Gastrocnemius medialis (tissue), 4 donors: ENCODE measurements at regions of chrX and their contacts with region 1.

Region 1: GRCh38 chrX:119105826-119106225 is 21.8 kb downstream of the KIAA1210 start:
- DNase-seq: no peak
- ATAC-seq: no peak
- H3K4me3 ChIP-seq: no peak overlapping the region
- H3K27ac ChIP-seq: no peak overlapping the region
- H3K4me1 ChIP-seq: no peaks in the 10 kb centered on the region
- H3K27me3 ChIP-seq: no peaks in the 10 kb centered on the region
- CTCF ChIP-seq: no peak
- POLR2A ChIP-seq: no peak

Region 2: DNA sequence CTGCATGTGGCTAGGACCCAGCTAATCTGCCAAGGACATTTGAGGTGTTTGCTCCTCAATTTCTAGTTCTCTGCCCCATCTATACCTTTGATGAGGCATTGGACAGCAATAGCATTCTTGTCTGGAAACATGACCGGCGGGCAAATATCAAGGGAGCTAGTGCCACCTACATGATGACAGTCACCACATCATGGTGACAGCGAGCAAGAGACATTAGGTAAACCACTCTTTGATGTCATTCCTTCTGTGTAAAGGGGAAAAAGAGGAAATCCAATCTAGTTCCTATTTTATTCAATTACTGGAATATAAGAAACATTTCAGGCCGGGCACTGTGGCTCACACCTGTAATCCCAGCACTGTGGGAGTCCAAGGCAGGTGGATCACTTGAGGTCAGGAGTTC is 399.2 kb before region 1 on chrX:
- in situ Hi-C with region 1: no loop called
- intact Hi-C with region 1: no loop called
- DNase-seq: no peak
- ATAC-seq: no peak
- H3K4me3 ChIP-seq: no peak overlapping the region
- H3K27ac ChIP-seq: no peak overlapping the region
- H3K4me1 ChIP-seq: no peaks in the 10 kb centered on the region
- H3K27me3 ChIP-seq: no peaks in the 10 kb centered on the region
- CTCF ChIP-seq: no peak
- POLR2A ChIP-seq: no peak

Region 3: DNA sequence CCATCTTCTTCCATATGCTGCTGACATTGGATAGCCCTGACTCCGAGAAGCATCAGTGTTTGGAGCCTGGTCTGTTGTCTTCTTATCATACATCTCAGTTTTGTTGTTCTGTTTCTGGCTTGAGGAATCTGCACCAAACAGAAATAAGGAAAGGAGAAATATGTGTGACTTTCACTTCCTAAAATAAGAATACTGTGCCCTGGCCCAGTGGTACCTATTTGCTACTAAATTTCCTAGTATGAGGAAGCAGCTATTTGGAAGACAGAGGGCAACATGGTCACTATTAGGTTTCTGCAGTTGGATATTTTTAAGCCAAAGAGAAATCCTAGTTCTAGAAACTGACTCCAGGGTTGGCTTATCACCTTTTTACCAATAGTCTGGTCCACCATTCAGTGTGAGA is 16.2 kb before region 1 on chrX:
- in situ Hi-C with region 1: no loop called
- intact Hi-C with region 1: loop called (anchors 1 kb)
- DNase-seq: no peak
- ATAC-seq: no peak
- H3K4me3 ChIP-seq: no peak overlapping the region
- H3K27ac ChIP-seq: no peak overlapping the region
- H3K4me1 ChIP-seq: no peaks in the 10 kb centered on the region
- H3K27me3 ChIP-seq: no peaks in the 10 kb centered on the region
- CTCF ChIP-seq: no peak
- POLR2A ChIP-seq: no peak

Region 4: GRCh38 chrX:119194621-119195020 is 88.8 kb after region 1 on chrX:
- in situ Hi-C with region 1: no loop called
- intact Hi-C with region 1: no loop called
- DNase-seq: no peak
- ATAC-seq: no peak
- H3K4me3 ChIP-seq: no peak overlapping the region
- H3K27ac ChIP-seq: no peak overlapping the region
- H3K4me1 ChIP-seq: no peaks in the 10 kb centered on the region
- H3K27me3 ChIP-seq: no peaks in the 10 kb centered on the region
- CTCF ChIP-seq: peak in 1 of 5 experiments; percentile 8
- POLR2A ChIP-seq: no peak